ENCODE measurements at regions of chr20 and their contacts with region 1.

Region 1: DNA sequence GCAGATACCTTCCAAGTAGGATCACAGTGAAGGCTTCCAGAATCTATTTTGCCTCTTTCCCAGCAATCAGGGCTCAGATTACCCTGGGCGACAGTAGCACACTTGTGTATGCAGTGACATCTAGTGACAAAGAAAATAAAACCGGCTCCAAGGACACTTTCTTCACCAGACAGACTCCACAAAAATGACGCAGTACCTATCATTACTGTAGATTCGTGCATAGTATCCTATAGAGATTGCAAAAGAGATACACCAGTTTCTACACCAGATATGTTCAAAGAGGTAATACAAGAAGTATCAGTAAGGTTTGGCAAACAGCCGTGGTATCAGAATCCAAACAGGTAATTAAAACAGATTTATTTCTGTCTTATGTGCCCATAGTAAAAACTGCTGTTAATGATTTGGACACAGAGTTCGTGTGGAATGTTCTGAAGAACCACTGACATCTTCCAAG is 600.4 kb upstream of the JAG1 start:
- DNase-seq: peak in 2 of 4 donors; percentile 54 to 71
- ATAC-seq: peak; percentile 92
- H3K4me3 ChIP-seq: no peak overlapping the region
- H3K27ac ChIP-seq: no peak overlapping the region
- H3K4me1 ChIP-seq: no peaks in the 10 kb centered on the region
- H3K27me3 ChIP-seq: no peaks in the 10 kb centered on the region
- CTCF ChIP-seq: peak in 1 of 2 donors; percentile 58

Region 2: DNA sequence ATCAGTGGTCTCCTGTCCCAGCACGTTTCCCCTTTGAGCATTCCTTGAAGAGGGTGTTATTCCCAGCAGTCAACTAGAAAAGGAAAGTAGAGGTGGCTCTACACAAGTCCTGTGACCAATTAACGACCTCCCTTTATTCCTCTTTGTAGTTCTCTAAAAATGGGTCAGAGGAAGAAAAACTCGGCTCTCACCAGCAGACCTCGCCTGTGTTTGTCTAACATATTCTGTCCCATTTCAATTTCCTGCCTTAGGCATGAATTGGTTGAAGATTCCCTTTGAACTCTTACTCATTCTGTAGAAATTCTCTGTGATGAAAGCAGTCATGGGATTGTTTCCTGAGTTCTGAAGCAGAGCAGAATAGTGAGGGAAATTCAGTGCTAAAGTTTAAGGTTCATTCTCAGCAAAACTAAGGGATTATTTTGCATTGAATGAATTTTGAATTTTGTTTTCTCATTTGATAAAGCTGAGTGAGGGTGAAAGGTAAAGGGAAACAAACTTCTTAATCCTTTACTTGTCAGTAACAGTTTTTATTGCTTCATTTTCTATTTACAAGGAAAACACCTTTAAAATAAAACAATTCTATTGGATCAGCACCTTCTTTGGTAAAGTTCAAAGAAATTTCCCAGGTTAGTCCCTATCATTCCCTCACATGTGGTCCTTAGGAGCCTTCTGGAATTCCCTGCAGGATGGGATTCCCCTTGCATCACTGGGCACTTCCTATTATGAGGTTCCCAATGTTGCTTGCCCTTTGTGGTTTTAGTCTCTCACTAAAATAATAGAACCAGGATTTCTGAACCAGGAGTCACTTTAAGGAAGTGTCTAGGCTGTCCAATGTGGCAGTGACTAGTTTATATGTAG is 733.3 kb before region 1 on chr20:
- intact Hi-C with region 1: loop called in 1 of 2 experiments (anchors 10 kb)
- DNase-seq: no peak
- ATAC-seq: peak; percentile 65
- H3K4me3 ChIP-seq: no peak overlapping the region
- H3K27ac ChIP-seq: peak overlapping the region; percentile 41 to 59
- H3K4me1 ChIP-seq: peaks cover 4 to 21% of the 10 kb centered on the region in 2 donors
- H3K27me3 ChIP-seq: no peaks in the 10 kb centered on the region
- CTCF ChIP-seq: no peak